Activated CD4-positive, alpha-beta T cell treated with anti-CD3 and anti-CD28 coated beads for 36 hours (primary cell): ENCODE measurements at regions of chr1 and their contacts with region 1.

Region 1: GRCh38 chr1:211654838-211655787 is 20.3 kb downstream of the NEK2 start:
- DNase-seq: peak; percentile 91
- ATAC-seq: peak; percentile 100
- H3K4me3 Mint-ChIP-seq: no peak overlapping the region
- H3K27ac Mint-ChIP-seq: no peak overlapping the region
- H3K4me1 Mint-ChIP-seq: no peaks in the 10 kb centered on the region
- H3K27me3 Mint-ChIP-seq: peaks cover 1% of the 10 kb centered on the region

Region 2: DNA sequence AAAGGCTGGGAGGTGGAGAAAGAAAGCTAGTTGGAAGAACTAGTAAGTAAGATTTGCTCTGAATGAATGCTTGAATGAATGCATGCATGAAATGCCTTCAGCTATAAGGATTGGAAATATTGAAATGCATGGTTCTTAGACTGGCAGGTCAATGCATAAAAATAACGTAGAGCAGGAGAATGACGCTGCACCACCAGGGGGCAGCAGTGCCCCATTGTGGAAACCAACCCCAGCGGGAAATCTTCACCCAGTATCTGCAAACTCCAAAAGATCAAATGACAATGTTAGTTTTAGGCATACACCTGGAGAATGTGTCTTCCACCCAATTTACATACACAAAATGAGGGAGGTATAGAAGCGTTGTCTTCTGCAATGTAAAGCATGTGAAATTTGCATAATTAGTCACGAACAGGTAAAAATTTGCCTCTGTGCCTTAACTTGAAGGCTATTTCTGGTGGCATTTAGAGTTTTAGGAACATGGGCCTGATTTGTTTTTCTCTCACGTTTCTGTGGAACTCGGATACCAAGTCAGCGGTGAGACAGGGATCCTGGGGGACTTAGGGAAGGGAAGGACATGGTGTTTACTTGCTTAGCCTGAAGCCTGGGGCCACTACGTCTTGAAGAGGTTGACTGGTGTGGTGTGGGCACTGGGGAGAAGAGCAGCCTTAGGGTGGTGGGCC is 1247.8 kb before region 1 on chr1:
- CTCF ChIA-PET with region 1: no interaction called
- POLR2A ChIA-PET with region 1: no interaction called
- intact Hi-C with region 1: loop called in 1 of 2 experiments (anchors 5 kb)
- DNase-seq: peak; percentile 88
- ATAC-seq: peak; percentile 83
- H3K4me3 Mint-ChIP-seq: no peak overlapping the region
- H3K27ac Mint-ChIP-seq: no peak overlapping the region
- H3K4me1 Mint-ChIP-seq: peaks cover 4% of the 10 kb centered on the region
- H3K27me3 Mint-ChIP-seq: no peaks in the 10 kb centered on the region

Region 3: GRCh38 chr1:211476200-211476849 is 178.8 kb before region 1 on chr1:
- CTCF ChIA-PET with region 1: interaction called, 7 read pairs
- POLR2A ChIA-PET with region 1: no interaction called
- intact Hi-C with region 1: loop called in 1 of 2 experiments (anchors 2 kb)
- DNase-seq: peak; percentile 89
- ATAC-seq: peak; percentile 81
- H3K4me3 Mint-ChIP-seq: no peak overlapping the region
- H3K27ac Mint-ChIP-seq: no peak overlapping the region
- H3K4me1 Mint-ChIP-seq: no peaks in the 10 kb centered on the region
- H3K27me3 Mint-ChIP-seq: peaks cover 14% of the 10 kb centered on the region